Caco-2 (cell line): ENCODE measurements at regions of chr4 and their contacts with region 1.

Region 1: GRCh38 chr4:105715692-105716278 is 7.2 kb downstream of the GSTCD start:
- DNase-seq: no peak
- H3K4me3 ChIP-seq: no peak overlapping the region
- H3K4me3 Mint-ChIP-seq: no peak overlapping the region
- H3K27ac Mint-ChIP-seq: no peak overlapping the region
- H3K4me1 ChIP-seq: peaks cover 5% of the 10 kb centered on the region; the same call in 1 of the 2 replicates
- H3K4me1 Mint-ChIP-seq: no peaks in the 10 kb centered on the region
- H3K27me3 ChIP-seq: no peaks in the 10 kb centered on the region
- H3K27me3 Mint-ChIP-seq: no peaks in the 10 kb centered on the region
- CTCF ChIP-seq: peak; percentile 24 to 31

Region 2: DNA sequence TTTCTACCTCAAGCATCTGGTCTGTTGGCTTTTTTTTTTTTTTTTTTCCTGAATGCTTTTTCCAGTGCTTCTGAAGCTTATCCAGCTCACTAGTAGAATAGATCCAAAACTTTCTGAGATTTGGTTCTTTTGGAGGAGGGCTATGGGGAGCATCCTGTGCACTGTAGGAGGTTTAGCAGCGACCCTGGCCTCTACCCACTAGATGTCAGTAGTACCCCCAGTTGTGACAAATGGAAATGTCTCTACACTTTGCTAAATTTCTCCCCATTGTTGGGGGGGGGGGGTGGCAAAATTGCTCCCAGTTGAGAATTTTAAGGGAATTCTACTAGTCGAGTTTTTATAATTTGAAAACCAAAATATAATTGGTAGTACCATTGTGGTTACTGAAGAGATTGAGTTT is 218.9 kb before region 1 on chr4:
- CTCF ChIA-PET with region 1: interaction called, 3 read pairs
- POLR2A ChIA-PET with region 1: no interaction called
- intact Hi-C with region 1: loop called (anchors 1 kb)
- DNase-seq: peak in 1 of 2 experiments; percentile 24
- H3K4me3 ChIP-seq: no peak overlapping the region
- H3K4me3 Mint-ChIP-seq: no peak overlapping the region
- H3K27ac Mint-ChIP-seq: no peak overlapping the region
- H3K4me1 ChIP-seq: no peaks in the 10 kb centered on the region
- H3K4me1 Mint-ChIP-seq: no peaks in the 10 kb centered on the region
- H3K27me3 ChIP-seq: no peaks in the 10 kb centered on the region
- H3K27me3 Mint-ChIP-seq: no peaks in the 10 kb centered on the region
- CTCF ChIP-seq: peak; percentile 32 to 57

Region 3: DNA sequence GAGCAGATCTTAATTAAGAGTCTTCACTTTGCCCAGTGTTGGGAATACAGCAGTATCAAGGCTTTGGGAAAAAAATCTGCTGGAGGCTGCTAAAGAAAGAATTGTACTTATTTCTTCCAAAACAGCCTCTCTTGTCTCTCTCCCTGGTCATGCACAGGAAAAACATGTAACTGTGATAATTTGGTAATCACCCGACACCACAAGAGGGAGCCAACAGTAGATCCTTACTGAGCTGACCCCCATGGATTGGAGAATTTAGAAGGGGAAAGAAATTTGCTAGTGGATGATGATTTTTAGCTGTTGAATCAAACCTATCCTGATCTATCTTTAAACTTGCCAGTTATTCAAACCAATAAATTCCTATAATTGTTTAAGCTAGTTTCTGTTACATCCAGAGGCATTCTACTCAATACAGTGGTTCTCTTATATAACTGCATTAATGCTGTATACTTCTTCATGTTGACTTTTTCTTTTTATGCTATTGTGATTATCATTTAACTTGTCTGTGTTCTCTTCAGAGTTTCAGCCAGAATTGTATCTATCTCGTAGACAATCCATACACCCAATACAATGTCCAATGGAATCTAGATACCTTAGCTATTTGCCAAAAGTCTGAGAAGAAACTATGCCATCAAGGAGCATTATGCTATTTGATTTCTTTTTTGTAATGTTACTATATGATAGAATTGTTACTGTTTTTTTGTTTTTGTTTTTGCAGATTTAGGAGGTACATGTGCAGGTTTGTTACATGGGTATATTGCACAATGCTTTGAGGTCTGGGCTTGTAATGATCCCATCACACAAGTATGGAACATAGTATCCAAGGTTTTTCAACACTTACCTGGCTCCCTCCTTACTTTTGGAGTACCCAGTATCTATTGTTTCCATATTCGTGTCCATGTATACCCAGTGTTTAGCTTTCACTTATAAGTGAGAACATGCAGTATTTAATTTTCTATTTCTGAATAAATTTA is 194.7 kb before region 1 on chr4:
- CTCF ChIA-PET with region 1: interaction called, 5 read pairs
- POLR2A ChIA-PET with region 1: no interaction called
- intact Hi-C with region 1: loop called (anchors 2 kb)
- DNase-seq: peak in 1 of 2 experiments; percentile 61
- H3K4me3 ChIP-seq: no peak overlapping the region
- H3K4me3 Mint-ChIP-seq: no peak overlapping the region
- H3K27ac Mint-ChIP-seq: no peak overlapping the region
- H3K4me1 ChIP-seq: no peaks in the 10 kb centered on the region
- H3K4me1 Mint-ChIP-seq: no peaks in the 10 kb centered on the region
- H3K27me3 ChIP-seq: no peaks in the 10 kb centered on the region
- H3K27me3 Mint-ChIP-seq: no peaks in the 10 kb centered on the region
- CTCF ChIP-seq: peak; percentile 56 to 69

Region 4: GRCh38 chr4:105644257-105644656 is 71.5 kb before region 1 on chr4:
- CTCF ChIA-PET with region 1: no interaction called
- POLR2A ChIA-PET with region 1: no interaction called
- intact Hi-C with region 1: no loop called
- DNase-seq: no peak
- H3K4me3 ChIP-seq: no peak overlapping the region
- H3K4me3 Mint-ChIP-seq: no peak overlapping the region
- H3K27ac Mint-ChIP-seq: no peak overlapping the region
- H3K4me1 ChIP-seq: no peaks in the 10 kb centered on the region
- H3K4me1 Mint-ChIP-seq: no peaks in the 10 kb centered on the region
- H3K27me3 ChIP-seq: no peaks in the 10 kb centered on the region
- H3K27me3 Mint-ChIP-seq: peaks cover 8% of the 10 kb centered on the region
- CTCF ChIP-seq: no peak

Region 5: GRCh38 chr4:105859233-105859632 is 143.4 kb after region 1 on chr4:
- CTCF ChIA-PET with region 1: no interaction called
- POLR2A ChIA-PET with region 1: no interaction called
- intact Hi-C with region 1: no loop called
- DNase-seq: no peak
- H3K4me3 ChIP-seq: no peak overlapping the region
- H3K4me3 Mint-ChIP-seq: no peak overlapping the region
- H3K27ac Mint-ChIP-seq: no peak overlapping the region
- H3K4me1 ChIP-seq: no peaks in the 10 kb centered on the region
- H3K4me1 Mint-ChIP-seq: no peaks in the 10 kb centered on the region
- H3K27me3 ChIP-seq: no peaks in the 10 kb centered on the region
- H3K27me3 Mint-ChIP-seq: peaks cover 3% of the 10 kb centered on the region
- CTCF ChIP-seq: no peak